ENCODE measurements at regions of chr7 and their contacts with region 1.

Region 1: DNA sequence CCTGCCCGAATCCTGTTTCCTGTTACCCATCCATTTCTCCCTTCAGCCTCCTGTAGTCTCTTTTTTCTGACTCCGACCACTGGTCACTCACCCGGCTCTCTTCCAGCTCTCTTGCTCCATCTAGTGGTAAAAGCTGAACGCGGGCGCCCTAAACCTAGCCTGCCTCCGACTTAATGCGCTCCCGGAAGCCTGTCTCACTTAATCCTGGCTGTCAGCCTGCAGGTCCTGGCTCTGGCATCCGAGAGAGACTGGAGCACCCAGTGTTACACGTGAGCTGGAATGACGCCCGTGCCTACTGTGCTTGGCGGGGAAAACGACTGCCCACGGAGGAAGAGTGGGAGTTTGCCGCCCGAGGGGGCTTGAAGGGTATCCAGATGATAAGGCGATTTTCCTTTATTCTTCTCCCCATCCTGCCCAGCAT is 10.3 kb downstream of the SUMF2 start:
- DNase-seq: peak; percentile 83 to 96 (median 89)
- H3K4me3 ChIP-seq: no peak overlapping the region
- H3K27ac ChIP-seq: no peak overlapping the region
- H3K4me1 ChIP-seq: peaks cover 4 to 7% of the 10 kb centered on the region in 2 donors
- H3K27me3 ChIP-seq: no peaks in the 10 kb centered on the region
- CTCF ChIP-seq: peak; percentile 88 to 97 (median 92)
- POLR2A ChIP-seq: no peak

Region 2: GRCh38 chr7:55483046-55483445 is 591.3 kb before region 1 on chr7:
- intact Hi-C with region 1: no loop called
- DNase-seq: peak in 2 of 7 donors; percentile 0 to 28
- H3K4me3 ChIP-seq: no peak overlapping the region
- H3K27ac ChIP-seq: no peak overlapping the region
- H3K4me1 ChIP-seq: no peaks in the 10 kb centered on the region
- H3K27me3 ChIP-seq: no peaks in the 10 kb centered on the region
- CTCF ChIP-seq: no peak
- POLR2A ChIP-seq: no peak

Region 3: GRCh38 chr7:55641273-55641691 is 433.1 kb before region 1 on chr7:
- intact Hi-C with region 1: loop called in 1 of 2 experiments (anchors 10 kb)
- DNase-seq: peak; percentile 49 to 78 (median 65)
- H3K4me3 ChIP-seq: no peak overlapping the region
- H3K27ac ChIP-seq: no peak overlapping the region
- H3K4me1 ChIP-seq: no peaks in the 10 kb centered on the region
- H3K27me3 ChIP-seq: no peaks in the 10 kb centered on the region
- CTCF ChIP-seq: peak; percentile 47 to 96 (median 88)
- POLR2A ChIP-seq: no peak

Region 4: DNA sequence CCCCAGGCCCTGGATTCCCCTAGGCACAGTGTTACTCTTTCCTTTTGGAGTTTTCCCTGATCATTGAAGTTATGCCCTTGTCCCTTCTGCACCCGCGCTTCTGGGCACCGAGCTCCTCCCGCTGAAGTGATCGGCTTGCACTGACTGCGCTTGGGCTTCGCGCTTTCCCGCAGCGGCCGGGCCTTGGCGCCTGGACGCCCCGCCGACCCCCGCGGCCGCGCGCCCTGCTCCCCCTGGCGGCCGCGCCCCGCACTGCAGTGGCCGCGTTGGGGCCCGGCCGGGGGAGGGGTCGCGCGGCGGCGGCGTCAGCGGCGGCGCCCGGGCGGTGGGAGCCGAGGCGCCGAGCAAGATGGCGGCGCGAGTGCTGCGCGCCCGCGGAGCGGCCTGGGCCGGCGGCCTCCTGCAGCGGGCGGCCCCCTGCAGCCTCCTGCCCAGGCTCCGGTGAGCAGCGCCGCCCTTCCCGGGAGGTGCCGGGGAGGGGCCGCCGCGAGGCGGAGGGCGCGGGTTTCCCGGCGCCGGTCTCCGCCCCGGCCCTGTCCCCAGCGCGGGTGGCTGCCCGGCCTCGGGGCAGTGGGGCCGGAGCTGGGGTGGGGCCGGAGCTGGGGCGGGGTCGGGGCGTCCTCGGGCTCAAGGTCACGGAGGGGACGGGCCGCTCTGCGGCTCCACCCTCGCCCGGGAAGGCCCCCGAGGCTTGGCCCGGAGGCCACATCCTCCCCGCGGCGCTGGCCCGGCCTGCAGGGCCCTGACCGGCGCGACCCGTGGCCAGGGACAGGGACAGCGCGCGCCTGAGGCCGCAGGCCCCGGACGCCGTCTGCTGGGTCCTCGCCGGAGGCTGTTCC is 109.9 kb before region 1 on chr7 and contains the start of gene NIPSNAP2:
- intact Hi-C with region 1: loop called in 1 of 2 experiments (anchors 10 kb)
- DNase-seq: peak; percentile 85 to 89 (median 87)
- H3K4me3 ChIP-seq: peak within 1 kb of the TSS in 3 of 4 donors; percentile 23 to 91 (median 63)
- H3K27ac ChIP-seq: peak within 1 kb of the TSS; percentile 77 to 99 (median 96)
- H3K4me1 ChIP-seq: peaks cover 19 to 22% of the 10 kb centered on the region in 2 donors
- H3K27me3 ChIP-seq: no peaks in the 10 kb centered on the region
- CTCF ChIP-seq: peak in 3 of 6 experiments; percentile 57 to 93 (median 81)
- POLR2A ChIP-seq: peak; percentile 79 to 82
- total RNA-seq, gene NIPSNAP2: 85.9 to 171 (median 102) TPM

Region 5: DNA sequence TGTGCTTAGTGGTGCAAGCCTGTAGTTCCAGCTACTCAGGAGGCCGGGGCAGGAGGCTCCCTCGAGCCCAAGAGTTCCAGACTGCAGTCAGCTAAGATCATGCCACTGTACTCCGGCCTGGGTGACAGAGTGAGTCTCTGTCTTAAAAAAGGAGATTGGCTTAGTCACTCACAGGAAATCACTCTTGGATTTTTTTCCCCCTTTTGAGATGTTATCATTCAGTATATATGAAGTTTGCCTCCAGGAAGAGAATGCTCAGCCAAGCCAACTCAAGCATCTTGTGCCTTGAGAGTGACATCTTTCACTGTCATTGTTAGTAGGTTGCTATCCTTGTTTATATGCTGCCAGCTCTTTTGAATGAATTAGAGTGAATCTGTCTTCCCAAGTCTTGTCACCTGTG is 82.0 kb before region 1 on chr7:
- intact Hi-C with region 1: no loop called
- DNase-seq: peak in 1 of 7 donors; percentile 9
- H3K4me3 ChIP-seq: no peak overlapping the region
- H3K27ac ChIP-seq: no peak overlapping the region
- H3K4me1 ChIP-seq: no peaks in the 10 kb centered on the region
- H3K27me3 ChIP-seq: no peaks in the 10 kb centered on the region
- CTCF ChIP-seq: no peak
- POLR2A ChIP-seq: no peak

Region 6: DNA sequence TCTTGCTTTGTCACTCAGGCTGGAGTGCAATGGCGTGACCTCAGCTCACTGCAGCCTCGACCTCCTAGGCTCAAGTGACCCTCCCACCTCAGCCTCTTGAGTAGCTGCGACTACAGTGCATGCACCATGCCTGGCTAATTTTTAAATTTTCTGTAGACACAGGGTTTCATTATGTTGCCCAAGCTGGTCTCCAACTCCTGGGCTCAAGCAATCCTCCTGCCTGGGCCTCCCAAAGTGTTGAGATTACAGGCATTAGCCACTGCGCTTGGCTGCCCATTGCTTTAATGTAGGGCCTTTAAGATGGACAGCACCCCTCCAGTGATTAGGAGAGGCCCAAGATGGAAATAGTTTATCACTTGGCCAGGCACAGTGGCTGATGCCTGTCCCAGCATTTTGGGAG is 70.6 kb before region 1 on chr7:
- intact Hi-C with region 1: loop called (anchors 5 kb)
- DNase-seq: no peak
- H3K4me3 ChIP-seq: no peak overlapping the region
- H3K27ac ChIP-seq: no peak overlapping the region
- H3K4me1 ChIP-seq: no peaks in the 10 kb centered on the region
- H3K27me3 ChIP-seq: no peaks in the 10 kb centered on the region
- CTCF ChIP-seq: no peak
- POLR2A ChIP-seq: no peak